ENCODE measurements at regions of chr18 and their contacts with region 1.

Region 1: DNA sequence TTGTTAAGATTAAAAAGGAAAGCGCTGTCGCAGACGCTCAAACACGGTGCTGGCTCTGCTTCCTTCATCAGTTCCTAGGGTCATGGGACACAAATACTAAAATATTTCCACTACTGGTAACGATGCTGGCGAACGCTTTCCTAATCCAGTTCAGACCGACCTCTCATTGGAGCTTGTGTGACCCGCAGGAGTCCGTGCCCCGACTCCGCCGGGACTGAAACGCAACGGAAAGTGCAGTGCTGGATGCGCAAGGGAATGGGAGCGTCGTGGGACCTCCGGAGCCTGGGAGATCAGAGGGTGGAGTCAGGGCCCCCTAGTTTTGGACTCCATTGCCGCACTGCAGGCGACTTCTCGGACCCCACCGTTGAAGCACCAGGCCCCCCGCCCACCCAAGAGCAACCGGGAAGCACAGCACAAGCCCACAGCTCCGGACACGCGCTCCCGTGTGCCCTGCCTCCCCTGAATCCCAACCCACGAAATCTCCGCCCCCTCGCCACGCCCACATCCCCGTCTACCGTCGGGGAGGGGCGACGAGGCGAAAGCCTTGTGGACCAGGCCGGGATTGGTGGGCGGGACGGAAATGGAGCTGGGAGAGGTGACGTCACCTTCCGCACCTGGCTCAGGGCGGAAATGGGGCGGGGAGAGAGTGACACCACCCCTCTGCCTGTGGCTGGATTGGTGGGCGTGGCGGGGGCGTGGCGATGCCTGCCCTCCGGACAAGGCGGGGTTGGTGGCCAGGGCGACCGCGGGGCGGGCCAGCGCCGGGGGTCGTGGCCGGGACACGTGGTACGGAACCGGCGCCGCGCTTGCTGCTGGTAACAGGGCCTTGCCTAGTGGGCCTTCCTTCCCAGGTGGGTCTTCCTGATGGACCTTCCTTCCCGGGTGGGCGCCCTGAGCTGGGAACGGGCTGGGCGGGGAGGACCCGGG is at the start of gene CNDP2:
- DNase-seq: peak; percentile 98 to 100 (median 100)

Region 2: GRCh38 chr18:74196220-74197119 is 299.4 kb before region 1 on chr18:
- intact Hi-C with region 1: loop called (anchors 10 kb)
- DNase-seq: peak in 37 of 42 donors; percentile 19 to 80 (median 48)

Region 3: GRCh38 chr18:74353169-74353775 is 142.6 kb before region 1 on chr18:
- intact Hi-C with region 1: loop called (anchors 5 kb)
- DNase-seq: peak; percentile 44 to 95 (median 85)

Region 4: DNA sequence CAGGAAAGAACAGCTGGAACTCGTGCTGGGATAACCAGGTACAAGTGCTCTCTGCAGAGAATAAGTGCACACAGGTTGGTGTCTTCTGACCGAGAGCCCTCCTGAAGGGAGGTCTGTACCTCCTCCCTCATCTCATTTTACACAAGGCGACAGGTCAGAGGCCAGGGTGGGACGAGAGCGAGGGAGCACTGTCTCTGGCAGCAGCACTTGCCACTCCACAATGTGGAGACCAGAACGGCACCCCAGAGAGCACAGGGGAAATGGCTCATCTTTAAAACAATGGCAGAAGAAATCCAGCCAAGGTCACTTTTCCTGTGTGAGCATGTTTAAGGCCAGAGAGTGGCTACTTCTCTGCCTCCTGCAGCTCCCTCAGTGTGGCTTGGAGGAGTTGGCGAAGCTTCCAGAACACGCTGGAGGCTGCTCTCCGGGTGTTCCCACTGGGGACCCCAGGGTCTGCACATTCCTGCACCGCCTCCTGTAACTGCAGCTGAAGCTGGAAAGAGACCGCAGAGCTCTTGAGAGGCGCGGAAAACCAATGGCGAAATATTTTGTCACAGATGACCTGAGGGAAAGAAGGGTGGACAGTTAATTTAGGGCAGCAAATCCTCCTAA is 59.6 kb before region 1 on chr18:
- intact Hi-C with region 1: no loop called
- DNase-seq: no peak

Region 5: DNA sequence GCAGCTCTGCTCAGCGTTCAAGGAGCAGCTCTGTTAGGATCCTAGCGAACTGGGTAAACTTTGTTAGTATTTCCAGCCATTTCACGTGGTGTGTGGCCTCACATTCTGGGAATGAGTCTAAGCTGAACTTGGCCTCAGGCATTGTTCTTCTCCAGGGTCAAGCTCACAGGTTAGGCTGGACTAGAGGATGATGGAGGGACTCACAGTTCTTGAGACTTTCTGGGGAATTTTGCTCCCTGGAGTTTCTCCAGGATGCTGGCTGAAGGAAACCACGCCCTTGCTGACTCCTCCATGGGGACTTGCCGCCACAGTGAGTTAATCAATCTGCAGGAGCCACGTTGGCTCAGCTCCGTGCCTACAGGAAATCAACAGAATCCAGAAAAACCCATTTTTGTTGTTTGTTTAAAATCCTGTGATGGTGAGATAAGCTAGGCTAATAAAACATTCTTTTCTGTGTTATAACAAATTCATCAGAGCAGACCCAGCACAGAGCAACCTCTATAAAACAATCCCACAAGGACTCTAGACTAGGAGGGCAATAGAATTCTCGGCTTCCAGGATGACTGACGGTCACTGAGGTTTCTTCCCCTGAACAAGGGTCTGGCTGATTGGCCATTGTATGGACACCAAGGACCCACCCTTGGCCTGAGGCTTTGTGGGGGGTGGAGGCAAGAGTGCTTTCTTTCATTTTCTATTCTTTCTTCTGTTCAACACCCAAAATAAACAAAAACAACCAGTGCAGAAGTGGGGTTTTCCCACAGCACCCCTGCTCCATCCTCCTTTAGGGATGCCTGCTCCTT is 51.1 kb after region 1 on chr18:
- intact Hi-C with region 1: loop called (anchors 5 kb)
- DNase-seq: peak in 3 of 42 donors; percentile 16 to 35 (median 19)

Measured in head of caudate nucleus (tissue), 42 donors.